CD8-positive, alpha-beta T cell (primary cell): ENCODE measurements at regions of chr22 and their contacts with region 1.

Region 1: DNA sequence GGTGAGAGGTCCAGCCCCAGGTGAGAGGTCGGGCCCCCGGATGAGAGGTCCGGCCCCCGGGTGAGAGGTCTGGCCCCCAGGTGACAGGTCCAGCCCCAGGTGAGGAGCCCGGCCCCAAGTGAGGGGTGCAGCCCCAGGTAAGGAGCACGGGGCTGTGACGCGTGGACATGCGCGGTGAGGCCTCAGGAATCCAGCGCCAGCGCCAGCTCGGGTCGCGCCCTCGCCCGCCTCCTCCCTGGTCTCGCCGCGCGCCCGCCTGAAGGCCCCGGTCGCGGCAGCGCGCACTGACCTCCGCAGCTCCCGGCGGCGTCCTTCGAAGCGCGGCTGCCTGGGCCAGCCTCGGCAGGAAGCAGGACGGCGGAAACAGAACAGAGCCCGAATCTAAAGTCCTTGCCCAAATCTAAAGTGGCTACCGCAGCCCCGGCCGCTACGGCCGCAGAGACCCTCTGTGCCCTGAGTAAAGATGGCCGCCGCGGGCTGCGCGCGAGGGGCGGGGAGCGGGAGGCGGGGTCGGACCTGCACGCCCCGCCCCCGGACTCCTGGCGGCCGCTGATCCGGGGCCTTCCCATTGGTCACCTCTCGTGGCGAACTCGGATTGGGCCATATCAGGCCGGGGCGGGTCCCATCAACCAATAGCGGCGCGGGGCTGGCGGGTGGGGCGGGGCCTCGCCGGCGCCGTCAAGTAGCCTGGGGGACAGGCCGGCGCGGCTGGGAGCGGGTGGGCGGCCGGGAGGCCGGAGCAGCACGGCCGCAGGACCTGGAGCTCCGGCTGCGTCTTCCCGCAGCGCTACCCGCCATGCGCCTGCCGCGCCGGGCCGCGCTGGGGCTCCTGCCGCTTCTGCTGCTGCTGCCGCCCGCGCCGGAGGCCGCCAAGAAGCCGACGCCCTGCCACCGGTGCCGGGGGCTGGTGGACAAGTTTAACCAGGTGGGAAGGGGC is at the starts of genes ALG12 and CRELD2:
- DNase-seq: peak; percentile 92 to 98 (median 96)
- ATAC-seq: peak; percentile 99
- H3K4me3 ChIP-seq: peak within 1 kb of the TSS; percentile 86 to 99
- H3K4me3 Mint-ChIP-seq: peak within 1 kb of the TSS; percentile 88
- H3K27ac ChIP-seq: peak within 1 kb of the TSS; percentile 72 to 83
- H3K27ac Mint-ChIP-seq: peak within 1 kb of the TSS; percentile 84
- H3K4me1 ChIP-seq: peaks cover 22% of the 10 kb centered on the region
- H3K4me1 Mint-ChIP-seq: peaks cover 28% of the 10 kb centered on the region
- H3K27me3 ChIP-seq: no peaks in the 10 kb centered on the region
- H3K27me3 Mint-ChIP-seq: no peaks in the 10 kb centered on the region
- CTCF ChIP-seq: no peak
- total RNA-seq, gene ALG12: 11.4 to 15.2 TPM
- total RNA-seq, gene CRELD2: 26.3 to 28.1 TPM

Region 2: DNA sequence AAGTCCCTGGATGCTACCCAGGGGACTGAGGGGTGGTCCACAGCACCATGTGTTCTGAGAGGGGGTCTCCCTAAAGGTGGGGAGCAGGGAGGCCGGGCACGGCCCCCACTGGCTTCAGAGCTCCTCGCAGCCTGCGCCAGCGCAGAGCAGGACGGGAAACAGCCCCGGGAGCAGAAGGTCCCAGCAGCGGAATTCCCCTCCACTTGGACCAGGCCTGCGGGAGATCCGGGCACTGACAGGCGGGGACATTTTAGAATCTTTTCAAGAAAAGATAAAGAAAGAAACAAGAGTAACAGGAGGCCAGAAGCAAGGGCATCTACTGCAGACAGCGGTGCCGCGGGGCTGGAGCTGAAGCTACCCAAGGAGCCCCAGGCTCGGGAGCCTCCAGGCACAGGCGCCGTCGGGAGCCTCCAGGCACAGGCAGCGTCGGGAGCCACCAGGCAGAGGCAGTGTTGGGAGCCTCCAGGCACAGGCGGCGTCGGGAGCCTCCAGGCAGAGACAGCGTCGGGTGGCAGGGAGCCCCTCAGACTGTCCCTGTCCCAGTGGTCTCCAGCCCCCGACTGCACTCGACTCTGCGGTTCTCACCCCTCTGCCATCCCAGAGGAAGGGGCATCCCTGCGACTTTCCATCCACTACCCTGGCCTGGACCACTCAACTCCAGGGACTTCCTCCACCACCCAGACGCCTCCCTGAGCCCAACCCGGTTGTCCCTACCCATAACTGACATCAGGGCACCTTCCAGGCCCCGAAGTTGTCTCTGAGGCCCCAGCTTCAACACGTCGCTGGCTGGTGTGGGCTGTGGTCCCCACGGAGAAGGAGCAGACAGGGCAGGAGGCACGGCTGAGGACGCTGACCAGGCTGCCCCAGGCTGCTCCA is 301.6 kb before region 1 on chr22:
- CTCF ChIA-PET with region 1: no interaction called
- POLR2A ChIA-PET with region 1: no interaction called
- intact Hi-C with region 1: no loop called
- DNase-seq: no peak
- ATAC-seq: no peak
- H3K4me3 ChIP-seq: no peak overlapping the region
- H3K4me3 Mint-ChIP-seq: no peak overlapping the region
- H3K27ac ChIP-seq: no peak overlapping the region
- H3K27ac Mint-ChIP-seq: no peak overlapping the region
- H3K4me1 ChIP-seq: no peaks in the 10 kb centered on the region
- H3K4me1 Mint-ChIP-seq: peaks cover 2% of the 10 kb centered on the region
- H3K27me3 ChIP-seq: no peaks in the 10 kb centered on the region
- H3K27me3 Mint-ChIP-seq: no peaks in the 10 kb centered on the region
- CTCF ChIP-seq: no peak

Region 3: DNA sequence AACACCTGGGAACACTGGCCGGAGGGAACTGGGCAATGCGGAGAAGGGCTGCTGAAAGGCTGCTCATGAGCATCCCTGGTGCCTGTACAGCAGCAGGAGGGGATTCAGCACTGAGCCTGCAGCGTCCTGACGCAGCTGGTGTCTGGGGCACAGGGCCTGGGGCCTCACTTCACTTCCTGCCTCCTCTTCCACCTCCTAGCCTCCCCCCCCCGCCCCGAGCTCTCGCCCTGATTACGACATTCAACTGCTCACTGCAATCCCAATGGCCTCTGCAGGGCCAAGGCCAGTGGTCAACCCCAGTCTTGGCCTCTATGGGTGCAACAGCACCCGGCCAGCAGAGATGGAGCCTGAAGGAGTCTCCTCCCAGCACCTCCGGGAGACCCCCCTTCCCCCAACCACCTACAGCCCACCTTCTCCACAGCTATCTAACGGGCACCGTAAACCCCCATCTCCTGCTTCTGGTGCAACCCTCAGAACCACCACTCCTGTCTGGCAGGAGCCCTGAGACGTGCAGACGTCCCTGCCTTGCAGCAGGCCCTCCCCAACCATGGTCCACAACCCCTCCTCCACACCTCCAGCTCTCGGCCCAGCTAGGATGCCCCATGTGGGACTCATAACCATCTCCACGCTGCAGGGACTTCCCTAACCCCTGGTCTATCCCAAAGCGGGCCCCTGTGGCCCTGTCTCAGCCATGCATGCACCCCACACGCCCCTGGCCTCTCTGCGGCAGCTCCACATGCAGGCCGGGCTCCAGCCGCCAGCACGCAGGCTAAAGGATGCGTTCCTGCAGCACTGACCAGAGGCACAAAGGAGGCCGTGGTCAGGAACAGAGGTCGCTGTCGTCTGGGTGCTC is 128.7 kb before region 1 on chr22:
- CTCF ChIA-PET with region 1: interaction called, 4 read pairs
- POLR2A ChIA-PET with region 1: interaction called, 3 read pairs
- intact Hi-C with region 1: loop called in 1 of 2 experiments (anchors 5 kb)
- DNase-seq: peak; percentile 16 to 73 (median 50)
- ATAC-seq: peak; percentile 83
- H3K4me3 ChIP-seq: peak overlapping the region; percentile 12 to 54
- H3K4me3 Mint-ChIP-seq: peak overlapping the region; percentile 76
- H3K27ac ChIP-seq: peak overlapping the region; percentile 49
- H3K27ac Mint-ChIP-seq: peak overlapping the region; percentile 90
- H3K4me1 ChIP-seq: peaks cover 28% of the 10 kb centered on the region
- H3K4me1 Mint-ChIP-seq: peaks cover 48% of the 10 kb centered on the region
- H3K27me3 ChIP-seq: no peaks in the 10 kb centered on the region
- H3K27me3 Mint-ChIP-seq: no peaks in the 10 kb centered on the region
- CTCF ChIP-seq: no peak

Region 4: DNA sequence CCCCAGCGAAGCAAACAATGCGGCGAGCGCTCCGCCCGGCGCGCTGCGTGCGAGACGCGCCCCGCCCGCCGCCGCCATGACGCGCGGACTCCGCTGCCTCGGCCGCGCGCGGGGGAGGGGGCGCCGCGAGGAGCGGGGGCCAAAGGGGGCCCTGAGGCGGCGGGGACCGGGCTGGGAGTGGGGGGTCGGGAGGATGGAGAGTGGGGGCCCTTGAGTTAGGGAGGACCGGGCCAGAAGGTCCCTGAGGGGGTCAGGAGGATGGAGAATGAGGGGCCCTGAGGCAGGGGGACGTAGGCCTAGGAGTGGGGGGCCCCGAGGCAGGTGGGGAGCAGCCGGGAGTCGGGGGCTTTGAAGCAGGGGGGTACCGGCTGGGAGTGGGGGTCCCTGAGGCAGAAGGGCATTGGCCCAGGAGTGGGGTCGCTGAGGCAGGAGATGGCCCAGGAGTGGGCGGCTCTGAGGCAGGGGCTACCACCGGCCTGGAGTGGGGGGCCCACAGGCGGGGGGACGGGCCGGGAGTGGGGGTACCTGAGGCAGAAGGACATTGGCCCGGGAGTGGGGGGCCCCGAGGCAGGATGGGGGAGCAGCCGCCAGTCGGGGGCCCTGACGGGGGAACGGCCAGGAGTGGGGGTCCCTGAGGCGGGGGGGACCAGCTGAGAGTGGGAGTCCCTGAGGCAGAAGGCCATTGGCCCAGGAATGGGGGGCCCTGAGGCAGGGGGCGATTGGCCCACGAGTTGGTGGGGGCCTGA is 90.2 kb before region 1 on chr22 and contains the start of gene BRD1:
- CTCF ChIA-PET with region 1: no interaction called
- POLR2A ChIA-PET with region 1: no interaction called
- intact Hi-C with region 1: loop called (anchors 2 kb)
- DNase-seq: peak in 8 of 9 experiments; percentile 42 to 84 (median 59)
- ATAC-seq: peak; percentile 52
- H3K4me3 ChIP-seq: peak within 1 kb of the TSS; percentile 62 to 71
- H3K4me3 Mint-ChIP-seq: peak within 1 kb of the TSS; percentile 96
- H3K27ac ChIP-seq: peak within 1 kb of the TSS; percentile 55 to 78
- H3K27ac Mint-ChIP-seq: peak within 1 kb of the TSS; percentile 97
- H3K4me1 ChIP-seq: peaks cover 38% of the 10 kb centered on the region
- H3K4me1 Mint-ChIP-seq: peaks cover 37% of the 10 kb centered on the region
- H3K27me3 ChIP-seq: no peaks in the 10 kb centered on the region
- H3K27me3 Mint-ChIP-seq: no peaks in the 10 kb centered on the region
- CTCF ChIP-seq: no peak
- total RNA-seq, gene BRD1: 159 to 167 TPM

Region 5: GRCh38 chr22:49838771-49839717 is 79.2 kb before region 1 on chr22:
- CTCF ChIA-PET with region 1: no interaction called
- POLR2A ChIA-PET with region 1: interaction called, 3 read pairs
- intact Hi-C with region 1: loop called in 1 of 2 experiments (anchors 1 kb)
- DNase-seq: peak; percentile 75 to 98 (median 87)
- ATAC-seq: peak; percentile 94
- H3K4me3 ChIP-seq: peak overlapping the region; percentile 39 to 65
- H3K4me3 Mint-ChIP-seq: peak overlapping the region; percentile 66
- H3K27ac ChIP-seq: peak overlapping the region; percentile 84 to 86
- H3K27ac Mint-ChIP-seq: peak overlapping the region; percentile 97
- H3K4me1 ChIP-seq: peaks cover 17% of the 10 kb centered on the region
- H3K4me1 Mint-ChIP-seq: peaks cover 23% of the 10 kb centered on the region
- H3K27me3 ChIP-seq: no peaks in the 10 kb centered on the region
- H3K27me3 Mint-ChIP-seq: no peaks in the 10 kb centered on the region
- CTCF ChIP-seq: no peak

Region 6: GRCh38 chr22:49936018-49936952 is 18.0 kb after region 1 on chr22:
- CTCF ChIA-PET with region 1: no interaction called
- POLR2A ChIA-PET with region 1: no interaction called
- intact Hi-C with region 1: loop called in 1 of 2 experiments (anchors 1 kb)
- DNase-seq: peak; percentile 80 to 96 (median 92)
- ATAC-seq: peak; percentile 79
- H3K4me3 ChIP-seq: peak overlapping the region; percentile 43 to 47
- H3K4me3 Mint-ChIP-seq: peak overlapping the region; percentile 67
- H3K27ac ChIP-seq: peak overlapping the region; percentile 56 to 82
- H3K27ac Mint-ChIP-seq: peak overlapping the region; percentile 85
- H3K4me1 ChIP-seq: peaks cover 26% of the 10 kb centered on the region
- H3K4me1 Mint-ChIP-seq: peaks cover 16% of the 10 kb centered on the region
- H3K27me3 ChIP-seq: no peaks in the 10 kb centered on the region
- H3K27me3 Mint-ChIP-seq: no peaks in the 10 kb centered on the region
- CTCF ChIP-seq: no peak

Region 7: GRCh38 chr22:49960159-49961004 is 42.1 kb after region 1 on chr22 and contains the start of gene PIM3:
- CTCF ChIA-PET with region 1: no interaction called
- POLR2A ChIA-PET with region 1: interaction called, 6 read pairs
- intact Hi-C with region 1: loop called (anchors 1 kb)
- DNase-seq: peak; percentile 80 to 96 (median 90)
- ATAC-seq: peak; percentile 61
- H3K4me3 ChIP-seq: peak within 1 kb of the TSS; percentile 67 to 86
- H3K4me3 Mint-ChIP-seq: peak within 1 kb of the TSS; percentile 93
- H3K27ac ChIP-seq: peak within 1 kb of the TSS; percentile 71 to 80
- H3K27ac Mint-ChIP-seq: peak within 1 kb of the TSS; percentile 95
- H3K4me1 ChIP-seq: peaks cover 33% of the 10 kb centered on the region
- H3K4me1 Mint-ChIP-seq: peaks cover 17% of the 10 kb centered on the region
- H3K27me3 ChIP-seq: no peaks in the 10 kb centered on the region
- H3K27me3 Mint-ChIP-seq: no peaks in the 10 kb centered on the region
- CTCF ChIP-seq: no peak
- total RNA-seq, gene PIM3: 316 to 328 TPM

Region 8: DNA sequence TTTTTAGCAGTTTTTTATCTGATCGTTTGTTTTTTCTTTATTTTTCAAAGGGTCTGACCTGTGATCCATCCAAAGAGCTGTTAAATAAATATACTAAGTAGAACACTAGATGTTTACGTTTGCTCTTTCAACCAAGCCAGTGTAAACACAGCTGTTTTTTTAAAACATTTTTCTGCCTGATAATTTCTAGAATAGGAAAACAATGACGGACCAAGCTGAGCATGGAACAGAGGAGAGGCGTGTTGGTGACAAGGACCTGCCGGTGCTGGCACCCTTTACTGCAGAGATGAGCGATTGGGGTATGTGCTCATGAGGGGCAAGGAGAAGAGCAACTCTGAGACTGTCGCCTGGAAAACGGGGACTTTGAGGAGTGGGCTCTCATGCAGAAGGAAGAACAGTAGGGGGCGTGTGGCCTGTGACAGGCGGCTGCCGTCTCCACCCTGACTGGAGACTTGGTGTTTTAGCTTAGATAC is 223.7 kb after region 1 on chr22:
- CTCF ChIA-PET with region 1: no interaction called
- POLR2A ChIA-PET with region 1: no interaction called
- intact Hi-C with region 1: no loop called
- DNase-seq: no peak
- ATAC-seq: no peak
- H3K4me3 ChIP-seq: no peak overlapping the region
- H3K4me3 Mint-ChIP-seq: no peak overlapping the region
- H3K27ac ChIP-seq: no peak overlapping the region
- H3K27ac Mint-ChIP-seq: no peak overlapping the region
- H3K4me1 ChIP-seq: no peaks in the 10 kb centered on the region
- H3K4me1 Mint-ChIP-seq: no peaks in the 10 kb centered on the region
- H3K27me3 ChIP-seq: no peaks in the 10 kb centered on the region
- H3K27me3 Mint-ChIP-seq: peaks cover 15% of the 10 kb centered on the region
- CTCF ChIP-seq: no peak

Region 9: GRCh38 chr22:50200461-50201190 is 282.4 kb after region 1 on chr22 and contains the start of gene SELENOO:
- CTCF ChIA-PET with region 1: no interaction called
- POLR2A ChIA-PET with region 1: no interaction called
- intact Hi-C with region 1: loop called in 1 of 2 experiments (anchors 5 kb)
- DNase-seq: peak; percentile 86 to 95 (median 91)
- ATAC-seq: peak; percentile 88
- H3K4me3 ChIP-seq: peak within 1 kb of the TSS; percentile 51 to 68
- H3K4me3 Mint-ChIP-seq: peak within 1 kb of the TSS; percentile 86
- H3K27ac ChIP-seq: peak within 1 kb of the TSS; percentile 60 to 77
- H3K27ac Mint-ChIP-seq: peak within 1 kb of the TSS; percentile 84
- H3K4me1 ChIP-seq: peaks cover 17% of the 10 kb centered on the region
- H3K4me1 Mint-ChIP-seq: peaks cover 24% of the 10 kb centered on the region
- H3K27me3 ChIP-seq: no peaks in the 10 kb centered on the region
- H3K27me3 Mint-ChIP-seq: no peaks in the 10 kb centered on the region
- CTCF ChIP-seq: no peak
- total RNA-seq, gene SELENOO: 32.7 to 34.6 TPM